ENCODE measurements at regions of chr11 and their contacts with region 1.

Region 1: DNA sequence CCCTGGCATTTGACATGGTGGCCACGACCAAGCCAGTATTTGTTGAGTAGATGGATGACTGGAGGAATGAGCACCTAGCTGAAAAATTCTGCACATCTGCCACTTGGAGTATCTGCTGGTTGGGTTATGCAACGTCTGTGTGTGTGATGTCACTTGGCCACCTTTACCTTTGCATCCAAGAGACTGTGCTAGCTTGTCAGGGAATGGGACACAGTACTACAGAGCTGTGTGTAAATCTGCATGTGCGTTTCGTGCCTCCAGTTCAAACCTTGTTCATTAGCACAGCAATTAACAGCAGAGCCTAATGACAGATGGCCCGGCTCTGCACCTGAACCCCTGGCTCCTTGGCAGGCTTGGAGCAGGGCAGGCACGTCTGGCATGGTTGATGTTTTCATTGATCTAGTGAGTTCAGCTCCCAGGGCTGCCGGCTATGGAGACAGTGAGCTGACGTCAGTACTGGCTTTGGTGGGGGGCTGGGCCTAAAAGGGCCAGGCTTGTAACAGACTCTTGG is 188.4 kb upstream of the NAV2 start:
- DNase-seq: peak; percentile 46 to 66
- H3K4me3 ChIP-seq: no peak overlapping the region
- H3K4me3 Mint-ChIP-seq: no peak overlapping the region
- H3K27ac Mint-ChIP-seq: peak overlapping the region; percentile 86
- H3K4me1 ChIP-seq: peaks cover 55% of the 10 kb centered on the region
- H3K4me1 Mint-ChIP-seq: peaks cover 55% of the 10 kb centered on the region
- H3K27me3 ChIP-seq: no peaks in the 10 kb centered on the region
- H3K27me3 Mint-ChIP-seq: no peaks in the 10 kb centered on the region
- CTCF ChIP-seq: no peak

Region 2: DNA sequence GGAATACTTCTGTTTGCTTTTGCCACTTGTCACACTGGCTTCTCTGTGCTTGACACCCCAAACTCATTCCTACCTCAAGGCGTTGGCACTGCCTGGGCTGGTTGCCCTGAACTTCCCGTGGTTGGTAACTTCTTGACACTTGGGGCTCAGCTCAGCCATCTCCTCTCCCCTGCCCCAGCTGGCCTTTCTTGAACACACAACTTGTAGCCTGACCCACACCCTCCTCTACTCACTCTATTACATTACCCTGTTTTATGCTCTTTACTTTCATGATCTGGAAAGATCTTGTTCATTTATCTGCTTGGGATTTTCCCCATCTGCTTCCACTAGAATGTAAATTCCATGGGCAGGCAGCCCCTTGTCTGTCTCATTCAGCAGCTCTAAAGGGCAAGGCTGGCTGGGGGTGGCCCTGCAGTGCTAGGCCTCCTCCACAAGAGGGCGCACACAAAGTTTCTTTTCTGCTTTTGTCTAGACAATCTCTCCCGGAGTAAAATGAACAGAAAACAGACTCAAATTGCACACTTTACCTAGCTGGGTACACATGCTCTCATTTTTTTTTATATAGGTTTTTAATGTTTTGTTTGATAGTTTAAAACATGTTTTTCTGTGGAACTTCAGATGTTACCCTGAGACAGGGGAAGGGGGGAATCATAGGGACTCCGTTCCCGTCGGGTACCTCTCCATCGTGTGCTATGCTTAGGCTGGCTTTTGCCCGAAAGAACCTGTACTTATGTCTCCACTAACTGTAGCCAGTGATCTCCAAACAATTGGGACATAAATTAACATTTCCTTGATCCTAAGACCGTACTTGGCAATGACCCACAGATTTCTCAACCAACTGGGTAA is 447.2 kb before region 1 on chr11:
- CTCF ChIA-PET with region 1: no interaction called
- POLR2A ChIA-PET with region 1: no interaction called
- intact Hi-C with region 1: no loop called
- DNase-seq: peak; percentile 52 to 78
- H3K4me3 ChIP-seq: no peak overlapping the region
- H3K4me3 Mint-ChIP-seq: no peak overlapping the region
- H3K27ac Mint-ChIP-seq: no peak overlapping the region
- H3K4me1 ChIP-seq: no peaks in the 10 kb centered on the region; the same call in 1 of the 2 replicates
- H3K4me1 Mint-ChIP-seq: peaks cover 14% of the 10 kb centered on the region
- H3K27me3 ChIP-seq: no peaks in the 10 kb centered on the region
- H3K27me3 Mint-ChIP-seq: no peaks in the 10 kb centered on the region
- CTCF ChIP-seq: peak; percentile 97 to 98

Region 3: DNA sequence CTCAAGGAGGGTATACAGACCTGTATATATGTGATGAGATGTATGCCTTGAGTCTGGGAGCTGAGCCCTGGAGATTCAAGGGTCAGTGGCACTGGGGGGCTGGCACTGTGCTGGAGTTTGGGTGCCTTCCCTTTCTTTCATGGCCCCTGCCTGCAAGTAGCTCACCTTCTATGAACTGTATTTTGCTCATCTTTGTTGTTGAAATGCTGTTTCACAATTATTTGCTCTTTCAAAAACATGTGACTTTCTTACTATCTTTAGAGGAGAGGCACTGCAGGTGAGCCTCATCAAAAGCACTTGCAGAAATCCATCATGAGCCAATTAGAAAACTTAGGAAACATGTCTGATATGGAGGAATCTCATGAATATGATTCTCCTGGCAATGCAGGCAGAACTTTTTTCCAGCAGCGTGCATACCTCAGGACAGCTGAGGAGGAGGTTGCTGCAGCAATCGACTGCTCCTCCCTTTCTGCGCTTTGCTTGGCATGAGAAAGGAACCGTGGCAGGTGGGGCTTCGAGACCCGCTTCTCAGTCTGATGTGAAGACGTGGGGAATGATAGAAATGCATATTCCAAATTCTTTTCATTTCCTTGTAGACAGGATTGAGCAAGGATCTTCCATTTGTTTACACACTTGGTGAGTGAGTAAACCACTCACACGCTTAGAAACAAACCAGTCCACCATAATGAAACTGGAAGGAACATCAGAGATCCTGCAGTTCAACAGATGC is 105.0 kb before region 1 on chr11:
- CTCF ChIA-PET with region 1: no interaction called
- POLR2A ChIA-PET with region 1: no interaction called
- intact Hi-C with region 1: loop called (anchors 1 kb)
- DNase-seq: peak; percentile 53 to 60
- H3K4me3 ChIP-seq: no peak overlapping the region
- H3K4me3 Mint-ChIP-seq: peak overlapping the region; percentile 74
- H3K27ac Mint-ChIP-seq: peak overlapping the region; percentile 94
- H3K4me1 ChIP-seq: peaks cover 25% of the 10 kb centered on the region
- H3K4me1 Mint-ChIP-seq: peaks cover 35% of the 10 kb centered on the region
- H3K27me3 ChIP-seq: no peaks in the 10 kb centered on the region
- H3K27me3 Mint-ChIP-seq: no peaks in the 10 kb centered on the region
- CTCF ChIP-seq: no peak

Region 4: GRCh38 chr11:19441752-19442553 is 82.3 kb before region 1 on chr11:
- CTCF ChIA-PET with region 1: no interaction called
- POLR2A ChIA-PET with region 1: no interaction called
- intact Hi-C with region 1: loop called (anchors 2 kb)
- DNase-seq: peak; percentile 67 to 79
- H3K4me3 ChIP-seq: no peak overlapping the region
- H3K4me3 Mint-ChIP-seq: no peak overlapping the region
- H3K27ac Mint-ChIP-seq: peak overlapping the region; percentile 82
- H3K4me1 ChIP-seq: peaks cover 26% of the 10 kb centered on the region
- H3K4me1 Mint-ChIP-seq: peaks cover 36% of the 10 kb centered on the region
- H3K27me3 ChIP-seq: no peaks in the 10 kb centered on the region
- H3K27me3 Mint-ChIP-seq: no peaks in the 10 kb centered on the region
- CTCF ChIP-seq: no peak

Region 5: DNA sequence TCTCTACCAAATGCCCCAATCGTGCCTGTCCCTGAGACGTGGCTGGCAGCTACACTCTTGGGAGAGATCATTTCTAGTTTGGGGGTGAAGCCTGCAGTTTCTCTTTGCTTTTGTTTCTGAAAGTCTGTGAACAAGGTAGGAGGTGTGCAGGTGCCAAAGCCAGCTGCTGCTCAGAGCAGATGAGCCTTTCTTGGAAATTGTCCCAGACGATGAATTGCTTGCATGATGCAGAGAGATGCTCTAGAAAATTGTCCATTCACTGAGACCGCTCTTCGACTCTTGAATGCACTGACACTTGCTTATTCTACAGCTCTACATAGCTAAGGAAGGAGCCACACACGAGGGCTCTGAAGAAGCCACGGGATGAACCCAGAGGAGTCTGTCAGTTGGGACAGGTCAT is 57.9 kb before region 1 on chr11:
- CTCF ChIA-PET with region 1: no interaction called
- POLR2A ChIA-PET with region 1: no interaction called
- intact Hi-C with region 1: no loop called
- DNase-seq: no peak
- H3K4me3 ChIP-seq: no peak overlapping the region
- H3K4me3 Mint-ChIP-seq: no peak overlapping the region
- H3K27ac Mint-ChIP-seq: no peak overlapping the region
- H3K4me1 ChIP-seq: no peaks in the 10 kb centered on the region
- H3K4me1 Mint-ChIP-seq: no peaks in the 10 kb centered on the region
- H3K27me3 ChIP-seq: no peaks in the 10 kb centered on the region
- H3K27me3 Mint-ChIP-seq: peaks cover 8% of the 10 kb centered on the region
- CTCF ChIP-seq: no peak

Region 6: DNA sequence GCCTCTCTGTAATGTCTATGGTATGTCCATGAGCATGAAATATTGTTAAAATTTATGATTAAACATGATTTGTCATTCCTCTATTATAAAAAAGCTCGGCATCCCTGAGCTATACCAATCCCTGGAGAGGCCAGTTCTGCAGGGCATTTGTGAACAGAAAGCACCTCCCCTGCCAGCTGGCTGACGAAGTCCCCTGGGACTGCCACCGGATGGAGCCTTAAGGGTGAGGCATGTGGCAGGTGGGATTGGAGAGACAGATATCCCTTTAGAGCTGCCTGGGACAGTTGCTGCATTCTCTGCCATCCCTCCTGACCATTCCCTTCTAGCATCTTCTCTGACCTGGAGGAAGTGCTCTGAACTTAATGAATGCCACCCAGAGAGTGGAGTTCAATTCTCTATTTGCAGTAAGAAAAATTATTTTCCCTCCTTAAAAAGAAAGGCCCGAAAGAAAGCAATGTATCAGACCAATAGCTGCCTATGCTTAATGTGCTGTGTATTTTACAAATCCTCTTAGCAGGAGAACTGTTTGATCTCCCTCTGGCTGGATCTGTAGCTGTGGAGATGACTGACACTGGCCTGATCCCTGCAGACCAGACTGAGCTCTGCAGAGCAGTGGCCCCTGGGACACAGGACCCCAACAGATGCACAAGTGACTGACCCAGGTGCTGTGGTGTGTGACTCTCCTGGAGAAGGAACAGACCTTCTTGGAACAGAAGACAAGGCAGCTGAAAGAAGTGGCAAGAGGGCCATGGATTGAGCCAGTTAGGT is 30.6 kb before region 1 on chr11:
- CTCF ChIA-PET with region 1: interaction called, 6 read pairs
- POLR2A ChIA-PET with region 1: interaction called, 4 read pairs
- intact Hi-C with region 1: loop called (anchors 1 kb)
- DNase-seq: peak; percentile 66 to 71
- H3K4me3 ChIP-seq: no peak overlapping the region
- H3K4me3 Mint-ChIP-seq: no peak overlapping the region
- H3K27ac Mint-ChIP-seq: no peak overlapping the region
- H3K4me1 ChIP-seq: no peaks in the 10 kb centered on the region
- H3K4me1 Mint-ChIP-seq: no peaks in the 10 kb centered on the region
- H3K27me3 ChIP-seq: no peaks in the 10 kb centered on the region
- H3K27me3 Mint-ChIP-seq: no peaks in the 10 kb centered on the region
- CTCF ChIP-seq: peak in 1 of 2 experiments; percentile 55

Region 7: DNA sequence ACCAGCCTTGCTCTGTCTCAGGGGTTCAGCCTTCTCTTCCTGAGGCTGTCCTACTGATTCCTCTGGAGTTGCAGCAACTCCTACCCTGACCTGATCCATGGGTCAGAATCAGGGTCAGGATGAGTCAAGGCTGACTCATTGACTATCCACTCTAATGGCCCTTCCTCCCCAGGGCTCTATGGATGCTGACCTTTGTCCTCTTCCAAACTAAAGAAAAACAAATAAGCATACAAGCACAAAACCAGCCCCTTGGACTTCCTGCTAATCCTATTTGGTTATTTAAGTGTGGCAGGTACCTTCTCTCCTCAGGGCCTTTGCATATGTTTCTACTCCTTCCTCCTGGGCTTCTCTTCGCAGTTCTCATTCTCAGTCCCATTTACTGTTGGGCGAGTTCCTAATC is 16.1 kb before region 1 on chr11:
- CTCF ChIA-PET with region 1: no interaction called
- POLR2A ChIA-PET with region 1: no interaction called
- intact Hi-C with region 1: loop called (anchors 1 kb)
- DNase-seq: peak; percentile 64 to 77
- H3K4me3 ChIP-seq: no peak overlapping the region
- H3K4me3 Mint-ChIP-seq: no peak overlapping the region
- H3K27ac Mint-ChIP-seq: peak overlapping the region; percentile 40
- H3K4me1 ChIP-seq: peaks cover 36% of the 10 kb centered on the region
- H3K4me1 Mint-ChIP-seq: peaks cover 29% of the 10 kb centered on the region
- H3K27me3 ChIP-seq: no peaks in the 10 kb centered on the region
- H3K27me3 Mint-ChIP-seq: no peaks in the 10 kb centered on the region
- CTCF ChIP-seq: no peak